B cell (primary cell): ENCODE measurements at regions of chr1 and their contacts with region 1.

Region 1: GRCh38 chr1:23867953-23868556 is at the start of gene FUCA1:
- DNase-seq: peak; percentile 97
- ATAC-seq: peak; percentile 98
- H3K4me3 ChIP-seq: peak within 1 kb of the TSS; percentile 42 to 81 (median 61)
- H3K4me3 Mint-ChIP-seq: peak within 1 kb of the TSS; percentile 93
- H3K27ac ChIP-seq: peak within 1 kb of the TSS in 1 of 2 donors; percentile 73
- H3K27ac Mint-ChIP-seq: peak within 1 kb of the TSS; percentile 91
- H3K4me1 ChIP-seq: peaks cover 18% of the 10 kb centered on the region in 2 donors
- H3K4me1 Mint-ChIP-seq: peaks cover 45% of the 10 kb centered on the region
- H3K27me3 ChIP-seq: no peaks in the 10 kb centered on the region
- H3K27me3 Mint-ChIP-seq: no peaks in the 10 kb centered on the region
- CTCF ChIP-seq: peak; percentile 93
- total RNA-seq, gene FUCA1: 17.4 and 19.3 TPM in 2 replicates

Region 2: DNA sequence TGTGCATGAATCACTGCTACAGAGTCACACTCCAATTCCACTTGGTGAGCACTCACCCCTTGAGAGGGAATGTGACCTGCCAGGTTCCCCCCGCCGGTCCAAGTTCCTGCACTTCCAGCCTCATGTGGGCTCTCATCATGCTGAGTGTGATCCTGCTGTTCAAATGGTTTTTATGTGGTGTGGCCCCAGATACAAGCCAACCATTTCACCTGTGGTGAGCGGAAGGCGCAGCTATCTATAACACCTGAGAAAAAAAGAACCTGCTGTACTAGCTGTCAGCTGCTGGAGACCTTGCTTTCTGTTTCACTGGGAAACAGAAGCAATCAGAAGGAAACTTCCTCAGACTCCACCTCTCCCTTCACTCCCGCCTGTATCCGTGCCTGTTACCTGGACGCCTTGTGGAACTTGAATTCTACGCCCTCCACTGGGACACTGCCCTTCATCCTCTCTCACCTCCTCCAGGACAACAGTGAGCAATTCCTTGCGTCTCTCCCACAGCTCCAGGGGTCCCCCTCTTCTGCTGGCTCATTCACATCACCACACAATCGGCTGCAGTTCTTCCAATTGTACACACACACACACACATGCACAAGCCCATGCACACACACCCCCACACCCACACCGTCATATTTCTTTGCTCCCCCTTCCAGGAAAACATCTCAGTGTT is 240.9 kb before region 1 on chr1:
- CTCF ChIA-PET with region 1: no interaction called
- POLR2A ChIA-PET with region 1: no interaction called
- intact Hi-C with region 1: no loop called
- DNase-seq: peak; percentile 72
- ATAC-seq: peak; percentile 38
- H3K4me3 ChIP-seq: peak overlapping the region in 4 of 5 experiments; percentile 15 to 46 (median 25)
- H3K4me3 Mint-ChIP-seq: peak overlapping the region; percentile 76
- H3K27ac ChIP-seq: peak overlapping the region; percentile 62 to 65
- H3K27ac Mint-ChIP-seq: peak overlapping the region; percentile 90
- H3K4me1 ChIP-seq: peaks cover 73 to 88% of the 10 kb centered on the region in 2 donors
- H3K4me1 Mint-ChIP-seq: peaks cover 73% of the 10 kb centered on the region
- H3K27me3 ChIP-seq: no peaks in the 10 kb centered on the region
- H3K27me3 Mint-ChIP-seq: no peaks in the 10 kb centered on the region
- CTCF ChIP-seq: no peak

Region 3: GRCh38 chr1:23691499-23692307 is 176.4 kb before region 1 on chr1 and contains the start of gene RPL11:
- CTCF ChIA-PET with region 1: no interaction called
- POLR2A ChIA-PET with region 1: no interaction called
- intact Hi-C with region 1: loop called (anchors 1 kb)
- DNase-seq: peak; percentile 92
- ATAC-seq: peak; percentile 100
- H3K4me3 ChIP-seq: peak within 1 kb of the TSS; percentile 76 to 99 (median 77)
- H3K4me3 Mint-ChIP-seq: peak within 1 kb of the TSS; percentile 97
- H3K27ac ChIP-seq: peak within 1 kb of the TSS; percentile 79 to 84
- H3K27ac Mint-ChIP-seq: peak within 1 kb of the TSS; percentile 94
- H3K4me1 ChIP-seq: peaks cover 16 to 22% of the 10 kb centered on the region in 2 donors
- H3K4me1 Mint-ChIP-seq: peaks cover 48% of the 10 kb centered on the region
- H3K27me3 ChIP-seq: no peaks in the 10 kb centered on the region
- H3K27me3 Mint-ChIP-seq: no peaks in the 10 kb centered on the region
- CTCF ChIP-seq: peak; percentile 79
- total RNA-seq, gene RPL11: 1,439 and 1,539 TPM in 2 replicates

Region 4: DNA sequence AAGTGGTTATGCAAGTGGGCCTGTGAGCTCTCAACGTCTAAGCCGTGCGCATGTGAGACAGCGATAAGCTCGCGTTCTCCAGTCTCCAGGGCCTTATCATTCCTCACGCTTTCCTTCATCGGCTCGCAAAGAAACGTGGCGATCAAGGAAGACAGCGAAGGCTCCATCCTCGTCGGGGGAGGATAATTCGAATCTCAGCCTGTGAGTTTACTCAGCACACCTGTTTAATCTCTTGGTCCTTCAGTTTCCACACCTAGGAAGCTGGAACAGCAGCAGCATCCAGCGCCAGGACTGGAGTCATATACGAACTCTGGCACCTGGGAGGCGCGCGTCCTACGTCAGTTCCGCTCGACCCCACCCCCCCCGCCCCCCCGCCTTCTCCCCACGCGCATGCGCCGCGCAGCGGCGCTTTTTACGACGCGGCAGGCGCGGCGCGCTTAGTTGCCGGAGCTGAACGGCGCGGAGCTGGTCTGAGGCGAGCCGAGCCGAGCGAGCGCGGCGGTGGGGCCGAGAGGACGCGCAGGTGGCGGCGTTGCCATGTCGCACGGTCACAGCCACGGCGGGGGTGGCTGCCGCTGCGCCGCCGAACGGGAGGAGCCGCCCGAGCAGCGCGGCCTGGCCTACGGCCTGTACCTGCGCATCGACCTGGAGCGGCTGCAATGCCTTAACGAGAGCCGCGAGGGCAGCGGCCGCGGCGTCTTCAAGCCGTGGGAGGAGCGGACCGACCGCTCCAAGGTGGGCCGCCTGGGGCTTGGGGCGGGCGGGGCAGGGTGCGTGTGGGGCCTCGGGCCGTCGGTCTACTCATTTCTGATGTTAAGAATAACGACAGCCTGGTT is 89.9 kb before region 1 on chr1 and contains the start of gene PITHD1:
- CTCF ChIA-PET with region 1: no interaction called
- POLR2A ChIA-PET with region 1: no interaction called
- intact Hi-C with region 1: no loop called
- DNase-seq: peak; percentile 92
- ATAC-seq: peak; percentile 88
- H3K4me3 ChIP-seq: peak within 1 kb of the TSS; percentile 60 to 91 (median 86)
- H3K4me3 Mint-ChIP-seq: peak within 1 kb of the TSS; percentile 91
- H3K27ac ChIP-seq: peak within 1 kb of the TSS; percentile 67 to 86
- H3K27ac Mint-ChIP-seq: peak within 1 kb of the TSS; percentile 90
- H3K4me1 ChIP-seq: peaks cover 15 to 20% of the 10 kb centered on the region in 2 donors
- H3K4me1 Mint-ChIP-seq: peaks cover 30% of the 10 kb centered on the region
- H3K27me3 ChIP-seq: no peaks in the 10 kb centered on the region
- H3K27me3 Mint-ChIP-seq: no peaks in the 10 kb centered on the region
- CTCF ChIP-seq: no peak
- total RNA-seq, gene PITHD1: 56.7 and 62.2 TPM in 2 replicates

Region 5: DNA sequence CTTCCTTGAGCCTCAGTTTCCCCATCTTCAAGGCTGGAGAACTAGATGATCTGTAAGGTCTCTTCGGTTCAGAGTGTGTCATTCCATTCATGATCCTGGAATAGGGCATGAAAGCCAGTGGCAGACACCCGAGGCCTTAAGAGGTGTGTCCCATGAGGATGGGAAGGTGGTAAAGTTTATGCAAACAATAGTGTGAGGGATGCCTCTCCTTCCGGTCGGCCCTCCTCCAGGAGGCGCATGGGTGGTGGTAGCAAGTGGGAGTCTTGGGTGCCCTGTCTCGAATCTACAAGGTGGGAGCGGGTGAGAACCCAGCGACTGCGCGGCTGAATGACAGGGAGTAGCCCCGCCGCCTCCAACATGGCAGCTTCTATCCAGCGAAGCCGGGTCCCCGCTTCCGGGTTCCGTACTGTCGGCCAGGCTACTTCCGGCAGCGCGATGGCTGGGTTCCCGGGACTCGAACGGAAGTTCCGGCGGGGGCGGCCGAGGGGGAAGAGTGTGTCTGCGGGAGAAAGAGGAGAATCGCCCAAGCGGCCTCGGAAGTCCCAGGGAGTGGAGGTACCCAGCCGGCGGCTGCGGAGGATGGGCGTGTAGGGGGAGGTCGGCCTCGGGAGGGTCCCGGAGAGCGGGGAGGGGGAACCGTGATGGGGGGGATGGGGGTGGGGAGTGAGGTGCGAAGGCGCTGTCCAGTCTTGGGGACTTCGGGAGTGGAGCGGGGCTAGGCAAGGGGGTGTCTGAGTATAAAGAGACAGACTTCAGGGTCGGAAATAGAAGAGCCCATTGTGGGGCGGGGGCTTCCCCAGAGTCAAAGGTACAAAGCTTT is 77.1 kb before region 1 on chr1 and contains the start of gene LYPLA2:
- CTCF ChIA-PET with region 1: no interaction called
- POLR2A ChIA-PET with region 1: no interaction called
- intact Hi-C with region 1: no loop called
- DNase-seq: peak; percentile 89
- ATAC-seq: peak; percentile 91
- H3K4me3 ChIP-seq: peak within 1 kb of the TSS; percentile 70 to 94 (median 88)
- H3K4me3 Mint-ChIP-seq: peak within 1 kb of the TSS; percentile 98
- H3K27ac ChIP-seq: peak within 1 kb of the TSS; percentile 69 to 81
- H3K27ac Mint-ChIP-seq: peak within 1 kb of the TSS; percentile 97
- H3K4me1 ChIP-seq: peaks cover 11 to 21% of the 10 kb centered on the region in 2 donors
- H3K4me1 Mint-ChIP-seq: peaks cover 21% of the 10 kb centered on the region
- H3K27me3 ChIP-seq: no peaks in the 10 kb centered on the region
- H3K27me3 Mint-ChIP-seq: no peaks in the 10 kb centered on the region
- CTCF ChIP-seq: no peak
- total RNA-seq, gene LYPLA2: 50.6 and 52.2 TPM in 2 replicates

Region 6: DNA sequence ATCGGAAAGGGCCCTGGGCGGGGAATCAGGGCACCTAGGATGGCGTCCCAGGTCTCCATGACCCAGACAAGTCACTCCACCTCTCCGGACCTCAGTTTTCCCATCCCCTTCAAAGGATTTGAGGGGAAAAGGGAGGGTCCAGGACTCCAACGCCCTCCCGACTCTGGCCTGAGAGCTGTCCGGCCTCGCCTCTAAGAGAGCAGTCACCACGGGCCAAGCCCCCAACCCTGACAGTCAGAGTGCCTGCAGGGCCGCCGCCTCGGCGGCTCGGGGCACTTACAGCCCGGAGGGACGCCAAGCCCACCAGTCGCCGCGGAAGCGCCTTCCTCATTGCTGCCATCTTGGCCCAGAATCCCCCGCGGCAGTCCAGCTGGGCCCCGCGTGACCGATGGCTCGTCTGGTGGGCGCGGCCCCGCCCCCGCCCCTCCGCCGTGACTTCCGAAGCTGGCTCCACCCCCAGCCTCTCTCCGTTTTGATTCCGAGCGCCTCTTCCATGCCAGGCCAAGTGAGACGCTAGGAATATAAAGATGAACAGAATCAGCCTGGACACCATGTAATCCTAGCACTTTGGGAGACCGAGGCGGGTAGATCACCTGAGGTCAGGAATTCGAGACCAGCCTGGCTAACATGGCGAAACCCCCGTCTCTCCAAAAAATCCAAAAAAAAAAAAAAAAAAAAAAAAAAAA is 42.8 kb before region 1 on chr1 and contains the start of gene HMGCL:
- CTCF ChIA-PET with region 1: interaction called, 5 read pairs
- POLR2A ChIA-PET with region 1: interaction called, 3 read pairs
- intact Hi-C with region 1: loop called (anchors 1 kb)
- DNase-seq: peak; percentile 92
- ATAC-seq: peak; percentile 98
- H3K4me3 ChIP-seq: peak within 1 kb of the TSS; percentile 76 to 95 (median 93)
- H3K4me3 Mint-ChIP-seq: peak within 1 kb of the TSS; percentile 96
- H3K27ac ChIP-seq: peak within 1 kb of the TSS; percentile 81 to 97
- H3K27ac Mint-ChIP-seq: peak within 1 kb of the TSS; percentile 98
- H3K4me1 ChIP-seq: peaks cover 10 to 14% of the 10 kb centered on the region in 2 donors
- H3K4me1 Mint-ChIP-seq: peaks cover 22% of the 10 kb centered on the region
- H3K27me3 ChIP-seq: no peaks in the 10 kb centered on the region
- H3K27me3 Mint-ChIP-seq: no peaks in the 10 kb centered on the region
- CTCF ChIP-seq: no peak
- total RNA-seq, gene HMGCL: 35.9 and 41.2 TPM in 2 replicates

Region 7: GRCh38 chr1:23838401-23838866 is 29.6 kb before region 1 on chr1:
- CTCF ChIA-PET with region 1: interaction called, 3 read pairs
- POLR2A ChIA-PET with region 1: no interaction called
- intact Hi-C with region 1: loop called (anchors 1 kb)
- DNase-seq: peak; percentile 89
- ATAC-seq: peak; percentile 100
- H3K4me3 ChIP-seq: peak overlapping the region in 4 of 5 experiments; percentile 19 to 60 (median 40)
- H3K4me3 Mint-ChIP-seq: peak overlapping the region; percentile 88
- H3K27ac ChIP-seq: no peak overlapping the region
- H3K27ac Mint-ChIP-seq: peak overlapping the region; percentile 83
- H3K4me1 ChIP-seq: peaks cover 6 to 7% of the 10 kb centered on the region in 2 donors
- H3K4me1 Mint-ChIP-seq: peaks cover 11% of the 10 kb centered on the region
- H3K27me3 ChIP-seq: no peaks in the 10 kb centered on the region
- H3K27me3 Mint-ChIP-seq: no peaks in the 10 kb centered on the region
- CTCF ChIP-seq: peak; percentile 3

Region 8: GRCh38 chr1:23878668-23879067 is 10.6 kb after region 1 on chr1:
- CTCF ChIA-PET with region 1: interaction called, 4 read pairs
- POLR2A ChIA-PET with region 1: interaction called, 4 read pairs
- intact Hi-C with region 1: loop called (anchors 1 kb)
- DNase-seq: no peak
- ATAC-seq: no peak
- H3K4me3 ChIP-seq: no peak overlapping the region
- H3K4me3 Mint-ChIP-seq: no peak overlapping the region
- H3K27ac ChIP-seq: no peak overlapping the region
- H3K27ac Mint-ChIP-seq: peak overlapping the region; percentile 26
- H3K4me1 ChIP-seq: no peaks in the 10 kb centered on the region
- H3K4me1 Mint-ChIP-seq: peaks cover 11% of the 10 kb centered on the region
- H3K27me3 ChIP-seq: no peaks in the 10 kb centered on the region
- H3K27me3 Mint-ChIP-seq: no peaks in the 10 kb centered on the region
- CTCF ChIP-seq: no peak

Region 9: DNA sequence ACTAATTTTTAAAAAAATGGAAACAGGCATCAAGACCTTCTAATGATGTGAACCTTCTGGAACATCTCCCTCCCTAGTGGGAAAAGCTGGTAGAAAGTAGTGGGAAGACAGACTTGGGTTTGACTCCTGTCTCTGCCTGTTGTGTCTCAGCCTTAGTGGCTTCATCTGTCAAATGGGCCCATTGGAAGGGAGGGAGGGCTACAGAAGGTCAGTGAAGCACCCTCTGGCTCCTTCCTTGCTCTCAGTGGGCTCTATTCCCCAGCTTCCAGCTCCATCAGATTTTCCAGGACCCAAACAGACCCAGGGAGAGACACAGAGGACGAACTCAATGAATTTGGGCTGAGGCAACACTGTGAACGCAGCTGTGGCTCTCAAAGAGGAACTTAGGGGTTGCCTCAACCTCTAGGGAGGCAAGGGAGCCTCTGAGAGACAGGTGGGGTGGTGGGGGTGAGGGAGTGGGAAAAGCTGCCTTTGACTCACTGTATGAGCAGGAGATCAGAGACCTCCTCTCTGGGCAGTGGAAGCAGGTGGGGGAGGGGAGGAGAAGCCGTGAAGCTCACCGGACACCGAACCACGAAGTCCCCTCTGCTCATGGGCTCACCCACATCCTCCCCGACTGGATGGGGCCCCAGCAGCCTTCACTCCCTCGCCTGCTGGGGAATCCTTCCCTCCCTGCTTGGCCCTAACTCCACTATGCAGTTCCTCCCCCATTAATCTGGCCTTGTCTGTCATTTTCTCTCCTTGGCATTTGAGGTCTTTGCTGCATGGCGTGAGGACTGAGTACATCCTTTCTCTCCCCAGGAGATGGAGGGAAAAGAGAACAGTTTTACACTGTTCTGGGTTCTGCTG is 40.7 kb after region 1 on chr1:
- CTCF ChIA-PET with region 1: interaction called, 22 read pairs
- POLR2A ChIA-PET with region 1: interaction called, 10 read pairs
- intact Hi-C with region 1: no loop called
- DNase-seq: peak; percentile 80
- ATAC-seq: peak; percentile 58
- H3K4me3 ChIP-seq: peak overlapping the region; percentile 53 to 94 (median 77)
- H3K4me3 Mint-ChIP-seq: peak overlapping the region; percentile 99
- H3K27ac ChIP-seq: peak overlapping the region; percentile 83 to 93
- H3K27ac Mint-ChIP-seq: peak overlapping the region; percentile 99
- H3K4me1 ChIP-seq: peaks cover 77 to 91% of the 10 kb centered on the region in 2 donors
- H3K4me1 Mint-ChIP-seq: peaks cover 86% of the 10 kb centered on the region
- H3K27me3 ChIP-seq: no peaks in the 10 kb centered on the region
- H3K27me3 Mint-ChIP-seq: no peaks in the 10 kb centered on the region
- CTCF ChIP-seq: no peak

Region 10: DNA sequence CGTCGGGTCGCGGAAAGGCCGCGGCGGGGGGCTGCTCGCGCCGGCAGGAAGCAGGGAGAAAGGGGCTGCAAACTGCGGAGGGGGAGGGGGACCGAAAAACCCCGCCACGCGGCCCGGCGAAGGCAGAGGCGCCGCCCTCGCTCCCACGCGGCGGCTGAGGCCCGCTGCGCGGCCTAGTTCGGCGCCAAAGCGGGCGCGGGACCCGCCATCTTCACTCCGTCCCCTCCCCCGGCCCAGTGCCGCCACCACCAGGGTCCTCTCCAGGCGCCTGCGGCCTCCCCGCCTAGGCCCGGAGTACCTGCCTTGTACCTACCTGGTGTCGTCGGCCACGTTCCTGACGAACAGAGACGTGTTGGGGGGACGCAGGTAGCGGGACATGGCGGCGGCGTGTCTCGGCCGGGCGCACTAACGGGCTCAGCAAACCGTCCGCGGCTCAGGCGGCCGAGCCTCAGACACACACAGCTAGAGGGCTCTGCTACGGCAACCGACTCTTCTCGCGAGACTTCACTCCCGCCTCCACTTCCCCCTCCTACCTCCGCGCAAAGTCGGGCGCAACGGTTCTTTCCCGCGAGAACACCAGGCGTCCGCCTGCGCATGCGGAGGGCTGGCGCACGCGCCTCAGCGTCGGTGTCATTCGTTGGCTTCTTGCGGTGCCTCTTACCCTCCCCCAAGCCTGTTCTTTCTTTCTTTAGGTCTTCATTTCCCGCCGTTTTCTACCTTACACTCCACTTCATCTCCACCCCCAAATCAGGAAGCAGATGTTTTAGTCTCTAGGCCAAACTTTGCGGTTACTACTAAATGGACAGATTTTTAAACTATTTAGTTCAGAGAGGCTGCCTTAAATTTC is 112.0 kb after region 1 on chr1 and contains the start of gene SRSF10:
- CTCF ChIA-PET with region 1: no interaction called
- POLR2A ChIA-PET with region 1: no interaction called
- intact Hi-C with region 1: no loop called
- DNase-seq: peak; percentile 100
- ATAC-seq: peak; percentile 96
- H3K4me3 ChIP-seq: peak within 1 kb of the TSS; percentile 84 to 96 (median 89)
- H3K4me3 Mint-ChIP-seq: peak within 1 kb of the TSS; percentile 91
- H3K27ac ChIP-seq: peak within 1 kb of the TSS; percentile 97
- H3K27ac Mint-ChIP-seq: peak within 1 kb of the TSS; percentile 95
- H3K4me1 ChIP-seq: peaks cover 32 to 41% of the 10 kb centered on the region in 2 donors
- H3K4me1 Mint-ChIP-seq: peaks cover 49% of the 10 kb centered on the region
- H3K27me3 ChIP-seq: no peaks in the 10 kb centered on the region
- H3K27me3 Mint-ChIP-seq: no peaks in the 10 kb centered on the region
- CTCF ChIP-seq: peak; percentile 42
- total RNA-seq, gene SRSF10: 213 and 223 TPM in 2 replicates